ENCODE measurements at regions of chr19 and their contacts with region 1.

Region 1: DNA sequence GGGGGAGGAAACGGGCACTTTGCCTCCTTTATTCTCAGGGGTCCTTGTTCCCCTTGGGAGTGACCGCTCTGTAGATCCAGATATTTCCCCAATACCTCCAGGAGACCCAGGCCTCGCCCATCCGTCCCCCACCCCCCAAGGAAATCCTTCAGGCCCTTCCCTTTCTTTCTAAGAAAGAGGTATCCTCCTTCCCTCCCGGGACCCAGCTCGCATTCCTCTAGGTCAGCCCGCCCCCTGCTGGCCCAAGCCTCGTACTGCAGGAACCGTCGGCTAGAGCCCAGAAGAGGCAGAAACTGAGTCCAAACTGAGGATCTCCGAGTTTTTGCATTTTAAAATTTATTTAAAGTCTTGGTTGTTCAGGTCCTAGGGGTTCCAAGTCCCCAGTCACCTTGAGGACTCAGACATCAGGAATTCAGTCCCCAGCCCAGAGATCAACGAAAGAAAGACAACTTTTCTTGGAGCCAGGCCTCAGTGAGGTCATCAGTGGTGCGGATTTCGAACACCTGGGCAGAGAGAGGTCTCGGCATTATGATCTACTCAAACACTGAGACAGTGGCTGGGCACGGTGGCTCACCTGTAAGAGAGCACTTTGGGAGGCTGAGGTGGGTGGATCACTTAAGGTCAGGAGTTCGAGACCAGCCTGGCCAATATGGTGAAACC is 7.5 kb upstream of the LRFN1 start:
- DNase-seq: peak in 1 of 2 experiments; percentile 99
- H3K4me3 ChIP-seq: peak overlapping the region in 1 of 4 experiments; percentile 6; a peak in 1 of 8 replicates
- H3K27ac ChIP-seq: no peak overlapping the region
- H3K4me1 ChIP-seq: peaks cover 0 to 6% (median 3%) of the 10 kb centered on the region in 4 experiments; a peak in 5 of 7 replicates
- H3K27me3 ChIP-seq: no peaks in the 10 kb centered on the region
- CTCF ChIP-seq: peak; percentile 89 to 96 (median 95)
- EP300 ChIP-seq: no peak
- POLR2A ChIP-seq: no peak
- RAD21 ChIP-seq: peak; percentile 95 to 99

Region 2: GRCh38 chr19:39199025-39199424 is 129.2 kb before region 1 on chr19:
- CTCF ChIA-PET with region 1: interaction called, 15 read pairs
- POLR2A ChIA-PET with region 1: no interaction called
- DNase-seq: no peak
- H3K4me3 ChIP-seq: no peak overlapping the region
- H3K27ac ChIP-seq: no peak overlapping the region
- H3K4me1 ChIP-seq: peaks cover 0 to 9% (median 6%) of the 10 kb centered on the region in 4 experiments; a peak in 5 of 7 replicates
- H3K27me3 ChIP-seq: peaks cover 13 to 33% (median 33%) of the 10 kb centered on the region in 4 experiments
- CTCF ChIP-seq: no peak
- EP300 ChIP-seq: no peak
- POLR2A ChIP-seq: no peak
- RAD21 ChIP-seq: no peak

Region 3: GRCh38 chr19:39223681-39224279 is 104.4 kb before region 1 on chr19:
- CTCF ChIA-PET with region 1: interaction called, 25 read pairs
- POLR2A ChIA-PET with region 1: no interaction called
- DNase-seq: peak in 1 of 2 experiments; percentile 65
- H3K4me3 ChIP-seq: no peak overlapping the region
- H3K27ac ChIP-seq: no peak overlapping the region
- H3K4me1 ChIP-seq: no peaks in the 10 kb centered on the region
- H3K27me3 ChIP-seq: peaks cover 0 to 6% (median 0%) of the 10 kb centered on the region in 4 experiments; a peak in 2 of 7 replicates
- CTCF ChIP-seq: no peak
- EP300 ChIP-seq: no peak
- POLR2A ChIP-seq: no peak
- RAD21 ChIP-seq: no peak

Region 4: GRCh38 chr19:39310558-39311311 is 17.4 kb before region 1 on chr19:
- CTCF ChIA-PET with region 1: interaction called, 11 read pairs
- POLR2A ChIA-PET with region 1: interaction called, 3 read pairs
- DNase-seq: no peak
- H3K4me3 ChIP-seq: peak overlapping the region in 1 of 4 experiments; percentile 17; a peak in 1 of 8 replicates
- H3K27ac ChIP-seq: no peak overlapping the region
- H3K4me1 ChIP-seq: peaks cover 0 to 6% (median under 1%) of the 10 kb centered on the region in 4 experiments; a peak in 4 of 7 replicates
- H3K27me3 ChIP-seq: peaks cover 0 to 23% (median 9%) of the 10 kb centered on the region in 4 experiments; a peak in 3 of 7 replicates
- CTCF ChIP-seq: no peak
- EP300 ChIP-seq: no peak
- POLR2A ChIP-seq: no peak
- RAD21 ChIP-seq: no peak